A673 (cell line): ENCODE measurements at regions of chr2 and their contacts with region 1.

Region 1: GRCh38 chr2:231674587-231675338 is 33.6 kb upstream of the PTMA start:
- DNase-seq: peak; percentile 75
- H3K4me3 ChIP-seq: no peak overlapping the region
- H3K27ac ChIP-seq: no peak overlapping the region
- H3K4me1 ChIP-seq: peaks cover 14% of the 10 kb centered on the region
- H3K27me3 ChIP-seq: no peaks in the 10 kb centered on the region
- CTCF ChIP-seq: peak; percentile 89

Region 2: DNA sequence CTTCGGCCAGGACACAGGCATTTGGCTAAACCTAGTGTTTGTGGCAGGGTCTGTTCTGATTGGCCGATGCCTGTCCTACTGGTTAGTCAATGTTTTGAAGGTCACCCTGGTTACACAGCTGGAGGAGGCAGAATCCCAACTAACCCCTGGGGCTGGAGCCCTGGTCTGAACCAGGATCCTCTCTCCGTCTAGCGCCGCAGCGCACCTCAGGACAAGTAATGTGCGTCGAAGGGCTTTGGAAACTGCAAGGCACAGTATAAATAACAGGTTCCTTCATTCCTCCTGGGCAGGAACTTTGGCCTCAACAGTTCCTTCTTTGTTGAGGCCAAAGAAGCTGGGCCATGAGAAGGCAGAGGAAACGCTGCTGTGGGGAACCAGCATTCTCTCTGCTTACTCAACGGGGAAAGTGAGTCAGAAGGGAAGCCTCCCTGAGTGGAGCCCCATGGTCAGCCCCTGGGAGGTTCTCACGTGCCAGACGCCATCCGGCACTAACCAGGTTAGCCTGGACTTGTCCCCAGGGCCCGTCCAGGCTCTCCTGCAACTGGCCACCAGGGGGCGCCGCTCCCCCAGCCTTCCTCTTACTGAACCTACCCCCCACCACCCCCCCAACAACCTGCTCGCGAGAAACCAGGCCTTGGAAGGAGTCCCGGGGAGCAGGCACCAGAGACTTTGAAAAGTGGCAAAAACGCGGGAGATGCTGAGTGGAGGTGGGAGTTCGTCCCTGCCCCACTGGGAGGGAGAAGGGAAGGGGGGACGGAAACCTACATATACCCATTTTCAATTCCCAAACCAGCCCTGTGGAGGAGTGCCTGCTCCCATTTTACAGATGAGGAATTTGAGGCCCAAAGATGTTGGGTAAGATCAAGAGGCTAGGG is 62.3 kb before region 1 on chr2:
- CTCF ChIA-PET with region 1: interaction called, 6 read pairs
- POLR2A ChIA-PET with region 1: no interaction called
- intact Hi-C with region 1: loop called (anchors 1 kb)
- DNase-seq: peak; percentile 88
- H3K4me3 ChIP-seq: no peak overlapping the region
- H3K27ac ChIP-seq: no peak overlapping the region
- H3K4me1 ChIP-seq: peaks cover 27% of the 10 kb centered on the region
- H3K27me3 ChIP-seq: no peaks in the 10 kb centered on the region
- CTCF ChIP-seq: peak; percentile 97

Region 3: DNA sequence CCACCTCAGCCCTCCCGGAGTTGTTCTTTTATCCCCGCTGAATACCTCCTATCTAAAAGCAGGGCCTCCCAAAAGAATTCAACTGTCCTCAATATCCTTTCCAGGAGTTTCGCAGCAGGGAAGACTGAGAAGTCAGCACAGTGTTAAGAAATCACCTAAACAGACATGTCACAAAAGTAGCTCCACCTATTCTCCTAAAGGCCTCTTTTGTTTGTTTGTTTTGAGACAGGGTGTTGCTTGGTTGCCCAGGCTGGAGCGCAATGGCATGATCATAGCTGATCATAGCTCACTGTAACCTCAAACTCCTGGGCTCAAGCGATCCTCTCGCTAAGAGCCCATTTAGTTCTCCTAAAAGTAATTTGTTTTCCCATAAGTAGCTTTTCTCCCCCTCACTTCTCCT is 28.3 kb before region 1 on chr2:
- CTCF ChIA-PET with region 1: interaction called, 10 read pairs
- POLR2A ChIA-PET with region 1: no interaction called
- intact Hi-C with region 1: no loop called
- DNase-seq: no peak
- H3K4me3 ChIP-seq: no peak overlapping the region
- H3K27ac ChIP-seq: no peak overlapping the region
- H3K4me1 ChIP-seq: no peaks in the 10 kb centered on the region
- H3K27me3 ChIP-seq: no peaks in the 10 kb centered on the region
- CTCF ChIP-seq: no peak

Region 4: DNA sequence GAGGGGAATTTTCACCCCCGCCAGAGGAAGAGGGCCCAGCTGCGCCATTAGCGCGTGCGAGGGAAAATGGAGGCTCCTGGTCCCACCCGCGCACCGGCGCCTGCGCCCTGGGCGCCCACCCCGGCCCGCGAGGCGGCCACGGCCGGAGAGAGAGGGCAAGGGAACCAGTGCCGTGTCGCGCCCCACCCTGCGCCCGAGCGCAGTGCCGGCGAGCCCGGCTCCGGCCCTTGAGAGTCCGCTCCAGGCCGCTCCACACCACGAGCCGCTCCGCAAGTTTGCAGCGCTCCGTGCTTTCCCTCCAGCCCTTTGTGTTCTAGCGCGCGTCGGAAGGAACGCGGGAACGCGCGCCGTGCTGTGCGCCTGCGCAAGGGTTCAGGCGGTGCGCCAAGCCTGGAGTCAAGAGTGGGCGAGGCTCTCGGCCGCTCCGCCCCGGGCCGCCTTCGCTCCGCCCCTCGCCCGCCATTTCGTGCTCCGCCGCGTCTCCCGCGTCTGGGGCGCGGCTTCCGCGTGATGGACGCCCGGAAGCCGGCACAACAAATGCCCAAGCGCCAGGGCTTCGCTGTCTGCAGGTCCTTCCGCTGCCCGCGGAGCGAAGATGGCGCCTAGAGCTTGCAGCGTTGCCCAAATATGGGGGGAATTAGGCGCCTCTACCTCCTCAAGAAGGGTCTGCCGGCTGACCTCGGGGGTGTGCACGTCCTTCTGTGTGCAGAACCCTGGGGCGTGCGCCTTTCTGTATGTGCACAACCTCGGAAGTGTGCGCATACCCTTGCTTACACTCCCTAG is 12.5 kb before region 1 on chr2:
- CTCF ChIA-PET with region 1: interaction called, 10 read pairs
- POLR2A ChIA-PET with region 1: no interaction called
- intact Hi-C with region 1: no loop called
- DNase-seq: peak; percentile 92
- H3K4me3 ChIP-seq: peak overlapping the region; percentile 25
- H3K27ac ChIP-seq: peak overlapping the region; percentile 63
- H3K4me1 ChIP-seq: peaks cover 7% of the 10 kb centered on the region
- H3K27me3 ChIP-seq: no peaks in the 10 kb centered on the region
- CTCF ChIP-seq: no peak

Region 5: GRCh38 chr2:231687133-231687852 is 12.5 kb after region 1 on chr2:
- CTCF ChIA-PET with region 1: interaction called, 16 read pairs
- POLR2A ChIA-PET with region 1: no interaction called
- intact Hi-C with region 1: no loop called
- DNase-seq: peak; percentile 44
- H3K4me3 ChIP-seq: no peak overlapping the region
- H3K27ac ChIP-seq: no peak overlapping the region
- H3K4me1 ChIP-seq: no peaks in the 10 kb centered on the region
- H3K27me3 ChIP-seq: no peaks in the 10 kb centered on the region
- CTCF ChIP-seq: peak; percentile 55

Region 6: DNA sequence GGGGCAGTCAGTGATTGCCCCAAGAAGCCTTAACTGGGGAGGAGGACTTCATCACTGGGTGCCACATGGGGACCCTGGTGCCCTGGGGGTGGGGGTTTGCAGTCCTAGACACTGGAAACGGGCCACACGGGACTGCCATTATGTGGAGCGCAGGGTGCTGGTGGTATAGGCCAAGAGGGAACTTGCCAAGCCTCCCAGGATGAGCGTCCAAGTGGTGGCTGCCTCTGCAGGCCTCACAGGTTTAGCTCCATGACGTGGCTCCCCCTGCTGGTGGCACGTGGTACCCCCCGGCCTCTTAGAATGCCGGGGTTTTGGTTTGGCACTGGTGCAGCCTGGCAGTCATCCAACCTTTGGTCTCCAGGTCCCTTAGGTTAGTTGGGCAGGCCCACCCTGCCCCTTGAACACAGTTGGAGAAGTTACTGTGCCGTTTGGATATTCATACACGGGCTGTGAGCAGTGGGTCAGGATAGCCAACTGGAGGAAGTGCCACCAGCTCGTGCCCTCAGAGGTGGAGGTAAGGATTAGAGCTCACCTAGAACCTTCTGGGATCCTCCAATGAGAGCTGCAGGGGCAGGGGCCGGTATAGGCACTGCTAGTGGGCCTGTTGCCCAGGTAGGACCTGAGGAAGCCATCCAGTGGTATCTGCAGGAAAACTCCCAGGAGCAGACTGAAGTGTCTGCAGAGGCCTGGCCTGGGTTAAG is 39.1 kb after region 1 on chr2:
- CTCF ChIA-PET with region 1: interaction called, 30 read pairs
- POLR2A ChIA-PET with region 1: interaction called, 9 read pairs
- intact Hi-C with region 1: loop called (anchors 1 kb)
- DNase-seq: peak; percentile 95
- H3K4me3 ChIP-seq: no peak overlapping the region
- H3K27ac ChIP-seq: peak overlapping the region; percentile 20
- H3K4me1 ChIP-seq: peaks cover 25% of the 10 kb centered on the region
- H3K27me3 ChIP-seq: no peaks in the 10 kb centered on the region
- CTCF ChIP-seq: peak; percentile 94

Region 7: DNA sequence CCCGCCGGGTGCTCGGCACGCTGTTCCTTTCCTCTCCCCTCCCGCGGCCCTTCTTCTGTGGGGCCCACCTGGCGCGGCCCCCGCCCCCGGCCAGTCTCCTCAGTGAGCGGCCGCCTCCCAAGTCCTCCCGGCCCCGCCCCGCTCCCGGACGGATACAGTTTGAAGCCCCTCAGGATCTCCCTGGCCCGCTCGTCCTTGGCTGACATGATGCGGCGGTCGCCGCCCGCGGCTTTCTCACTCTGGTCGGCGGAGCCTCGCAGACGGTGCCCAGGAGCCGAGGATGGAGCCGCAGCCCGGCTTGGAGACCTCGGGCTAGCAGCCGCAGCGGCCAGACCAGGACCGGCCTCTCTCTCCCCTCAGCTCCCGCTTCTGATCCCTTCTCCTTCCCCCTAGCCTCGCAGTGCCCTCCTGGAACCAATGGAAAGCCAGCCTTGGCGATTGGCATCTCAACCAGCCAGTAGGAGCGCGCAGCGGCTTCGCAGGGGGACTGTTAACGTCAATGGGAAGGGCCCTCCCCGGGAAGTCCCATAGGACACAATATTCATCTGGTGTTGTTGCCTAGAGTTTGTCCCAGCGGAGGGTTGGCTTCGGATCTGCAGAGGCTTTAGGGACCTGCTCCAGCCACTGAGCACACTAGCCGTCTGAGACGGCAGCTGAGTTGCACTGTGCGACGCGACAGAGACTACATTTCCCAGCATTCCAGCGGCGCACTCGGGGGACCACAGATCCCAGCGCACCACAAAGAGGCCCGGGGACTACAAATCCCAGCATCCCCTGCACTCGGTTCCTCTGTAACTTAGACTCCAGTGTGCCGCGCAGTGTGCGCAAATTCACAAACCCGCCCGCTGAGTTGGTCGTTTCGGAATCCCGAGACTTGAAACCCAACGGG is 106.4 kb after region 1 on chr2 and contains the start of gene PDE6D:
- CTCF ChIA-PET with region 1: interaction called, 11 read pairs
- POLR2A ChIA-PET with region 1: no interaction called
- intact Hi-C with region 1: loop called (anchors 10 kb)
- DNase-seq: peak; percentile 99
- H3K4me3 ChIP-seq: peak within 1 kb of the TSS; percentile 78
- H3K27ac ChIP-seq: peak within 1 kb of the TSS; percentile 78
- H3K4me1 ChIP-seq: peaks cover 10% of the 10 kb centered on the region
- H3K27me3 ChIP-seq: no peaks in the 10 kb centered on the region
- CTCF ChIP-seq: no peak
- total RNA-seq, gene PDE6D: 19.7 and 27.3 TPM in 2 replicates